AG04449 (cell line): ENCODE measurements at regions of chr20 and their contacts with region 1.

Region 1: GRCh38 chr20:32902456-32903420 is 44.0 kb downstream of the EFCAB8 start:
- DNase-seq: no peak
- H3K4me3 ChIP-seq: no peak overlapping the region
- CTCF ChIP-seq: peak; percentile 90

Region 2: GRCh38 chr20:32945710-32946221 is 43.0 kb after region 1 on chr20:
- CTCF ChIA-PET with region 1: interaction called, 60 read pairs
- POLR2A ChIA-PET with region 1: no interaction called
- DNase-seq: peak; percentile 3
- H3K4me3 ChIP-seq: no peak overlapping the region
- CTCF ChIP-seq: peak; percentile 37

Region 3: DNA sequence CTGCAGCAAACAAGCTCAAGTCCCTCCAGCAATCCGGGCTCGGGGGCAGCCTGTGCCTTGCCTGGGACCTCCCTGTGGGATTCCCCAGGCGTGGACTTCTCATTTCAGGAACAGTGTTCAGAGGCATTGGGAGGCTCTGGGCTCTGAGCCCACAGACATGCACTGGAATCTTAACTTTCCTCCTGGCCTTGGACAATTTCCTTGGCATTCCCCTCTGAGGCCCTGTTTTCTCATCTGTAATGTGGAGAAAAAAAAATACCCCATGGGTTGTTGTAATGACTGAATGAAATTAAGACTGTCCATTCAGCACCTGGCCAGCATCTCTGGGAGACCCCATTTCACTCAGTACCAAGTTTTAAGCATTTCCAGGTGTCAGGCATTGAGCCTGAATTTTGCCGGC is 194.3 kb after region 1 on chr20:
- CTCF ChIA-PET with region 1: interaction called, 21 read pairs
- POLR2A ChIA-PET with region 1: no interaction called
- DNase-seq: no peak
- H3K4me3 ChIP-seq: no peak overlapping the region
- CTCF ChIP-seq: no peak

Region 4: GRCh38 chr20:33211817-33212424 is 309.2 kb after region 1 on chr20:
- CTCF ChIA-PET with region 1: interaction called, 13 read pairs
- POLR2A ChIA-PET with region 1: no interaction called
- DNase-seq: no peak
- H3K4me3 ChIP-seq: no peak overlapping the region
- CTCF ChIP-seq: peak; percentile 20

Region 5: DNA sequence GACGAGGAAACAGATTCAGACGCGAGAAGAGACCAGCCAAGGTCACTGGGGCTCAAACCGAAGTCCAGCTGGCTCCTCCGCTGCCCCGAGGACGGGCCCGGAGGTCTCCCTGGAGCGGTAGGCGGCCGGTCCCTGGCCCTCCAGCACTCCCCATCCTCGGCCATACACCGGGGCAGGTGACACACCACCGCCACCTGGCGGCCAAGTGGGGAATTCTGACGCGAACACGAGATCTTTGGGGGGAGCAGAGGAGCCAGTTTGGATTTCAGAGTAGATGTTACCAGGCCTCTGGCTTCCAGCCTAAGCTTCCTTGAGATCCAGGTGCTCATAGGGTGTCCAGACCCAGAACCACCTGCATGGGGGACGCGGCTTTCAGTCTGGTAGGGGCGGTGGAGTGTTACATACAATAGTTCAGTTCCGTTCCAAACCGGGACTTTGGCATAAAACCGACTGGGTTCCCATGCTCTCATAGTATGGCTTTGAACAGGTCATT is 396.4 kb after region 1 on chr20:
- CTCF ChIA-PET with region 1: interaction called, 16 read pairs
- POLR2A ChIA-PET with region 1: no interaction called
- DNase-seq: no peak
- H3K4me3 ChIP-seq: no peak overlapping the region
- CTCF ChIP-seq: peak; percentile 91